ENCODE measurements at regions of chr6 and their contacts with region 1.

Region 1: GRCh38 chr6:34414999-34415858 is 10.6 kb downstream of the RPS10 start:
- DNase-seq: peak; percentile 78
- H3K4me3 ChIP-seq: no peak overlapping the region
- H3K27ac ChIP-seq: no peak overlapping the region
- H3K4me1 ChIP-seq: no peaks in the 10 kb centered on the region
- H3K27me3 ChIP-seq: no peaks in the 10 kb centered on the region
- CTCF ChIP-seq: peak; percentile 72

Region 2: DNA sequence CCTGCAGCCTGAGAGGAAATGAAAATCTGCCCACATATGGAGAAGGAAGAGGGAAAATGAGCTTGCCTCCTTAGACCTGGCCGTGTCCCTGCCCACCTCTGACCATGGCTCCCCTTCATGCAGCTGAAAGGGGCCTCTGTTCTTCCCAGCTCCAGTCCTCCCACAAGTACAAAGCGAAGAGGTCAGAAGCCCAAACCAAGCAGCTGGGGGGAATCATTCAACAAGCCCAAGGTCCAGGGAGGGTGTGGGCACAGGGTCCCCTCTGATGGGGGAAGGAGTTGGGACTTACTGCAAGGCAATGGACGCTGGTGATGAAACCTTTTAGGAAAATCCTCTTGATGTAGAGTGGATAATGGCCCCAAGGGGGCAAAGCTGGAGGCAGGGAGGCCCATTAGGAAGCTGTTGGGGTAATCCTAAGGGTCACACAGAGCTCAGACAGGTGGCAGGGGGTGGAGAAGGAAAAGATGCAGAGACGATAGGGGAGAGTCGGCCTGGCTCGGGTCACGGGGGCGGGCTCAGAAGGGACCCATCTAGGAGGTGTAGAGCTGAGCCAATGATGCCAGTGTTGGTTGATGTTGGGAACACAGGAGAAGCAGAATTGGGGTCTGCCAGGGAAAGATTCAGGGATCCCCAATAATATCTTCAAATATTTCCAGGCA is 253.2 kb before region 1 on chr6:
- CTCF ChIA-PET with region 1: interaction called, 8 read pairs
- POLR2A ChIA-PET with region 1: no interaction called
- intact Hi-C with region 1: loop called (anchors 5 kb)
- DNase-seq: no peak
- H3K4me3 ChIP-seq: no peak overlapping the region
- H3K27ac ChIP-seq: no peak overlapping the region
- H3K4me1 ChIP-seq: no peaks in the 10 kb centered on the region
- H3K27me3 ChIP-seq: no peaks in the 10 kb centered on the region
- CTCF ChIP-seq: no peak

Region 3: GRCh38 chr6:34196126-34196830 is 219.0 kb before region 1 on chr6:
- CTCF ChIA-PET with region 1: interaction called, 38 read pairs
- POLR2A ChIA-PET with region 1: interaction called, 11 read pairs
- intact Hi-C with region 1: loop called (anchors 2 kb)
- DNase-seq: peak; percentile 85
- H3K4me3 ChIP-seq: peak overlapping the region; percentile 44
- H3K27ac ChIP-seq: no peak overlapping the region
- H3K4me1 ChIP-seq: no peaks in the 10 kb centered on the region
- H3K27me3 ChIP-seq: no peaks in the 10 kb centered on the region
- CTCF ChIP-seq: peak; percentile 98

Region 4: DNA sequence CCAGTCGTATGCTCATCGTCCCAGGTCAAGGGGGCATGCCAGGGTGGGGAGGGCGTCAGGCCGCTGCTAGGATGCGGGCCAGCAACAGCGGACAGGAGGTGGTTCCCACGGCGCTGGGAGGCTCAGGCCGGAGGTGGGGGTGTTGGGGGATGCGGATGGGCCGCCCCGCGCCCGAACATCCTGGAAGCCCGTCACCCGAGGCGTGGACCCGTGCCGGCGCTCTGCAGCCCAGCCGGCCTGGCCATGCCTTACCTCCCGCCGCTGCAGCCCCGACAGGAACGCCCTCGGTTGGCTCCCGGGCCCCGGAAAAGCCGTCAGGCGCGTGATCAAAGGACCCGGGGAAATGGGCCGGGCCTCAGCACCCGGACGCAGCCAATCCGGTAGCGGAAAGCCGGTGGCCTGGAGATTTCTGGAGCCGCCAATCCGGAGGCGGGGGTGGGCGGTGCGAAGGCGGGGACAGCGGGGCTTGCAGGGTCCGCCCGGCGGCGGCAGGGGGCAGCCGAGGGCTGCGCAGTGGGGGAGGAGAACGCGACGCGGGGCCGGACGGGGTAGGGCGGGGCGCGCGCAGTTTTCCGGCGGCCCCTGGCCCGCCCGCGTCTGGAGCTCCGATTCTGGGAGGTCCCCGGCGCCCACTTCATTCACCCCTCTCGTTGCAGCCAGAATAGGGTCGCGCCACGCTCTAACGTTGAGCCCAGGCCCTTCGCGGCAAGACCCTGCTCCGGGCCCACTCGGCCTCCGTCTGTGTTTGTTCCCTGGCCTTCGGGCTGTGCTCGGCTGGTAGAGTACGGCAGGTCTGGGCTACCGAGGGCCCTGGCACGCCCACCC is 166.3 kb before region 1 on chr6 and contains the start of gene SMIM29:
- CTCF ChIA-PET with region 1: interaction called, 34 read pairs
- POLR2A ChIA-PET with region 1: interaction called, 3 read pairs
- intact Hi-C with region 1: loop called (anchors 1 kb)
- DNase-seq: peak; percentile 96
- H3K4me3 ChIP-seq: peak within 1 kb of the TSS; percentile 81
- H3K27ac ChIP-seq: peak within 1 kb of the TSS; percentile 72
- H3K4me1 ChIP-seq: peaks cover 19% of the 10 kb centered on the region
- H3K27me3 ChIP-seq: no peaks in the 10 kb centered on the region
- CTCF ChIP-seq: peak; percentile 89
- total RNA-seq, gene SMIM29: 19.1 and 24.0 TPM in 2 replicates

Region 5: GRCh38 chr6:34425498-34426410 is 10.5 kb after region 1 on chr6 and contains the start of gene RPS10:
- CTCF ChIA-PET with region 1: no interaction called
- POLR2A ChIA-PET with region 1: interaction called, 13 read pairs
- intact Hi-C with region 1: no loop called
- DNase-seq: peak; percentile 96
- H3K4me3 ChIP-seq: peak within 1 kb of the TSS; percentile 78
- H3K27ac ChIP-seq: peak within 1 kb of the TSS; percentile 90
- H3K4me1 ChIP-seq: peaks cover 19% of the 10 kb centered on the region
- H3K27me3 ChIP-seq: no peaks in the 10 kb centered on the region
- CTCF ChIP-seq: no peak
- total RNA-seq, gene RPS10: 1,482 and 1,497 TPM in 2 replicates

Region 6: GRCh38 chr6:34897130-34897529 is 481.9 kb after region 1 on chr6:
- CTCF ChIA-PET with region 1: no interaction called
- POLR2A ChIA-PET with region 1: no interaction called
- intact Hi-C with region 1: no loop called
- DNase-seq: no peak
- H3K4me3 ChIP-seq: no peak overlapping the region
- H3K27ac ChIP-seq: no peak overlapping the region
- H3K4me1 ChIP-seq: no peaks in the 10 kb centered on the region
- H3K27me3 ChIP-seq: no peaks in the 10 kb centered on the region
- CTCF ChIP-seq: no peak